ENCODE measurements at regions of chr2 and their contacts with region 1.

Region 1: GRCh38 chr2:120343433-120344105 is 2.4 kb upstream of the INHBB start:
- DNase-seq: peak; percentile 93

Region 2: GRCh38 chr2:120436885-120437603 is 93.5 kb after region 1 on chr2:
- intact Hi-C with region 1: loop called (anchors 5 kb)
- DNase-seq: peak; percentile 51

Region 3: DNA sequence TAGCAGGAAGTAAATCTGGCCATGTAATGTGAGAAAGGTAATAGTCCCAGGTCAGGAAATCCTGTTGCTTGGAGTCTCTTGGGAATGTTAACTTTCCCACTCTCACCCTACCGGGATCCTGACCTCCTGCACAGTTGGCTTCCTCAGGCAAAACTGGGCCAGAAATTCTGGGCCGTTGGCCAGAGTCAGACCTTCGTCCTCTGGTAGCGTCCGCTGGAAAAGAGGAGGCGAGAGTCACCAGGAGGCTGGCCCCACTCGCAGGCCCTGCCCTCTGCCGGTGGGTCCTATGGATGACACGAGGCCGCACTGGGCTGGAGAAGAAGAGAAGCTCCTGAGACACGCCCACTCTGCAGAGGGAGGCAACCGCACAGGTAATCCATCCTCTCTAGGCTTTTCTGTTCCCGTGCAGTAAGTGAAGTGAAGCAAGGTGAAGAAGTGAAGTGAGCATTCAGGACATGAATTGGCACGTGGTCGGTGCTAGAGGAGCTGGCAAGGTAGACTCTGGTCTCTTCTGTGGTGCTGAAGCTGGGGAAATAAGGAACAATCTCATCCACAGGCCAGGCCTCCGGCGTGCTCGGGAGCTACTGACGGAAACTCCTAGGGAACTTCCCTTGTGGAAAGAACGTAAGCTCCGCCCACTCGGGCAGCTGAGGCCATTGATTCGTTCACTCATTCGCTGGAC is 209.4 kb after region 1 on chr2:
- intact Hi-C with region 1: loop called (anchors 1 kb)
- DNase-seq: peak; percentile 94

Region 4: GRCh38 chr2:120675460-120676130 is 332.0 kb after region 1 on chr2:
- intact Hi-C with region 1: loop called (anchors 1 kb)
- DNase-seq: peak; percentile 79

Region 5: GRCh38 chr2:121076885-121077549 is 733.4 kb after region 1 on chr2:
- intact Hi-C with region 1: loop called (anchors 10 kb)
- DNase-seq: peak; percentile 90

Measured in cardiac septum (tissue), 1 donor.